Transverse colon (tissue), 4 donors: ENCODE measurements at regions of chr20 and their contacts with region 1.

Region 1: GRCh38 chr20:37990571-37991151 is 42.6 kb downstream of the TTI1 start:
- DNase-seq: peak; percentile 76
- H3K4me3 ChIP-seq: no peak overlapping the region
- H3K27ac ChIP-seq: peak overlapping the region; percentile 24 to 53 (median 48)
- H3K4me1 ChIP-seq: peaks cover 14 to 63% (median 49%) of the 10 kb centered on the region in 4 donors
- H3K27me3 ChIP-seq: no peaks in the 10 kb centered on the region
- CTCF ChIP-seq: no peak
- EP300 ChIP-seq: peak; percentile 56
- POLR2A ChIP-seq: no peak

Region 2: DNA sequence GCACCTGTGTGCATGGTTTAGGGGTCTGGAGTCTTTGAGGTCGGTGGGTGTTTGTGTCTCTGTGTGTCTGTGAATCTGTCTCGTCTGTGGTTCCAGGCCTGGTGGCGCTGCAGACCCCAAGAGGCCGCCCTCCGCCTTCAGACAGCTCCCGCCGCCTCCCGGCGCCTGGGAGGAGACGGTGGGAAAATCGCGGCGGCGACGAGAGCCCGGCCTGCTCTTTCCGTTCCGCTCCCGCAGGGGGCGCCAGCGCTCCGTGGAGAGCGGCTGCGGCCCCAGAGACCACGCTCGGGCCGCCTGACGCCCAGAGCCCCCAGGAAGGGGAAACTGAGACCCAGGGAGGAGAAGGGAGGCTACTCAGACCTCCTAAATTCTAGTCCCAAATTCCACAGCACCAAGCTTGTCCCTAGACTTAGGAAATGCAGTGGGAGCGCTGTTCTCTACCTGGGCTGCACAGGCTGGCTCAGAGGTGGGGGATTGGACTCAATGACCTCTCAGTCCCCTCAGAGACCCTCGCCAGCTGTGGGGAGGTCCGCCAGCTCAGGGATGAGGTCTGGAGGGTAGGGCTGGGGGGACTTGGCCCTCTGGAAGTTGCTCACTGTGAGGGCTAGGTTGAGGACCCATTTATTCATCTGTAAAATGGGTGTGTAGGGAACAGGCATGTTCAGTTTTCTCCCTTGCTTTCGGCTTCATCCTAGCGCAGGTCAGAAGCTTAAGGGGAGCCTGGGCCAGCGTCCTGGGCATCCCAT is 426.1 kb before region 1 on chr20:
- in situ Hi-C with region 1: loop called in 2 of 4 experiments (anchors 25 kb)
- intact Hi-C with region 1: loop called (anchors 5 kb)
- DNase-seq: peak; percentile 44
- H3K4me3 ChIP-seq: no peak overlapping the region
- H3K27ac ChIP-seq: no peak overlapping the region
- H3K4me1 ChIP-seq: peaks cover 4 to 5% (median 5%) of the 10 kb centered on the region in 4 donors
- H3K27me3 ChIP-seq: peaks cover 88% of the 10 kb centered on the region
- CTCF ChIP-seq: peak; percentile 71 to 89 (median 85)
- EP300 ChIP-seq: no peak
- POLR2A ChIP-seq: no peak

Region 3: DNA sequence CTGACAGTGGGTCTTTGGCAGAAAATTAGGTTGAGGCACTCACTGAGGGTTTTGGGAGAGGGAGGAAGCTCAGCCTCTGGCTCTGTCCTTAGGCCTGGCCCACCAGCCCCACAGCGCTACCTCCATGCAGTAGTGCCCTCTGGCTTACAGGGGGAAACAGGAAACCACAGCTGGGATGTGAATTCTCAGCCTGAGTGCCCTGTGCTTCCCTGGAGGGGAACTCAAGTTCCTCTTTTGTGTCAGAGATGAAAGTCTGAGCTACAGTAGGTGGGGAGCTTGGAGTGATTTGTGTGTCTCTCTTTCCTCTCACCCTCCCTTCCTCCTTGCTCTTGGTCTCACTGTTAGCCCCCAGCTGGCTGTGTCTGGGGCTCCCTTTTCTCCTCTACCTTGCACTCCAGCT is 414.8 kb before region 1 on chr20:
- in situ Hi-C with region 1: loop called in 3 of 4 experiments (anchors 10 to 25 kb)
- intact Hi-C with region 1: no loop called
- DNase-seq: no peak
- H3K4me3 ChIP-seq: no peak overlapping the region
- H3K27ac ChIP-seq: no peak overlapping the region
- H3K4me1 ChIP-seq: no peaks in the 10 kb centered on the region
- H3K27me3 ChIP-seq: peaks cover 14% of the 10 kb centered on the region
- CTCF ChIP-seq: no peak
- EP300 ChIP-seq: no peak
- POLR2A ChIP-seq: no peak

Region 4: GRCh38 chr20:37758332-37758731 is 232.3 kb before region 1 on chr20:
- in situ Hi-C with region 1: no loop called
- intact Hi-C with region 1: loop called (anchors 10 kb)
- DNase-seq: no peak
- H3K4me3 ChIP-seq: no peak overlapping the region
- H3K27ac ChIP-seq: no peak overlapping the region
- H3K4me1 ChIP-seq: no peaks in the 10 kb centered on the region
- H3K27me3 ChIP-seq: no peaks in the 10 kb centered on the region
- CTCF ChIP-seq: no peak
- EP300 ChIP-seq: no peak
- POLR2A ChIP-seq: no peak